Activated CD4-positive, alpha-beta T cell treated with anti-CD3 and anti-CD28 coated beads, Interleukin-2, amount 10 ng/mL, durations not matched to agents 7 days and 5 days (primary cell): ENCODE measurements at regions of chr6 and their contacts with region 1.

Region 1: GRCh38 chr6:6547110-6547879 is 41.2 kb upstream of the LY86 start:
- DNase-seq: peak; percentile 83
- H3K4me3 Mint-ChIP-seq: peak overlapping the region; percentile 21
- H3K27ac Mint-ChIP-seq: no peak overlapping the region
- H3K4me1 Mint-ChIP-seq: peaks cover 12% of the 10 kb centered on the region
- H3K27me3 Mint-ChIP-seq: peaks cover 51% of the 10 kb centered on the region

Region 2: GRCh38 chr6:6515691-6516607 is 31.3 kb before region 1 on chr6:
- CTCF ChIA-PET with region 1: interaction called, 10 read pairs
- POLR2A ChIA-PET with region 1: no interaction called
- DNase-seq: peak; percentile 41
- H3K4me3 Mint-ChIP-seq: no peak overlapping the region
- H3K27ac Mint-ChIP-seq: no peak overlapping the region
- H3K4me1 Mint-ChIP-seq: peaks cover 14% of the 10 kb centered on the region
- H3K27me3 Mint-ChIP-seq: peaks cover 78% of the 10 kb centered on the region

Region 3: DNA sequence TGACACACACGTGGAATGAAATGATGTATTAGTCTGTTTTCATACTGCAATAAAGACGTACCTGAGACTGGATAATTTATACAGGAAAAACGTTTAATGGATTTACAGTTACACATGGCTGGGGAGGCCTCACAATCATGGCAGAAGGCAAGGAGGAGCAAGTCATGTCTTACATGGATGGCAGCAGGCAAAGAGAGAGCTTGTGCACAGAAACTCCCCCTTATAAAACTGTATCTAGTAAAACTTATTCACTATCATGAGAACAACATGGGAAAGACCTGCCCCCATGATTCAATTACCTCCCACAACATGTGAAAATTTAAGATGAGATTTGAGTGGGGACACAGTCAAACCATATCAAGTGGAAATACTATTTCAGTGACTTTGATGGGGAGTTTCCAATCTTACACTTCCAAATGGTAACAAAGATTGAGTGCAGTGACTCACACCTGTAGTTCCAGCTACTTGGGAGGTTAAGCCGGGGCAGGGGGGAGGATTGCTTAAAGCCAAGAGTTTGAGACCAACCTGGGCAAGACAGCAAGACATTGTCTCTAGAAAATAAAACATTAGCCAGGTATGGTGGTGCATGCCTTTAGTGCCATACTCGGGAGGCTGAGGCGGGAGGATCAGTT is 33.0 kb after region 1 on chr6:
- CTCF ChIA-PET with region 1: no interaction called
- POLR2A ChIA-PET with region 1: no interaction called
- DNase-seq: no peak
- H3K4me3 Mint-ChIP-seq: no peak overlapping the region
- H3K27ac Mint-ChIP-seq: no peak overlapping the region
- H3K4me1 Mint-ChIP-seq: peaks cover 39% of the 10 kb centered on the region
- H3K27me3 Mint-ChIP-seq: peaks cover 6% of the 10 kb centered on the region